CD14-positive monocyte (primary cell): ENCODE measurements at regions of chr3 and their contacts with region 1.

Region 1: DNA sequence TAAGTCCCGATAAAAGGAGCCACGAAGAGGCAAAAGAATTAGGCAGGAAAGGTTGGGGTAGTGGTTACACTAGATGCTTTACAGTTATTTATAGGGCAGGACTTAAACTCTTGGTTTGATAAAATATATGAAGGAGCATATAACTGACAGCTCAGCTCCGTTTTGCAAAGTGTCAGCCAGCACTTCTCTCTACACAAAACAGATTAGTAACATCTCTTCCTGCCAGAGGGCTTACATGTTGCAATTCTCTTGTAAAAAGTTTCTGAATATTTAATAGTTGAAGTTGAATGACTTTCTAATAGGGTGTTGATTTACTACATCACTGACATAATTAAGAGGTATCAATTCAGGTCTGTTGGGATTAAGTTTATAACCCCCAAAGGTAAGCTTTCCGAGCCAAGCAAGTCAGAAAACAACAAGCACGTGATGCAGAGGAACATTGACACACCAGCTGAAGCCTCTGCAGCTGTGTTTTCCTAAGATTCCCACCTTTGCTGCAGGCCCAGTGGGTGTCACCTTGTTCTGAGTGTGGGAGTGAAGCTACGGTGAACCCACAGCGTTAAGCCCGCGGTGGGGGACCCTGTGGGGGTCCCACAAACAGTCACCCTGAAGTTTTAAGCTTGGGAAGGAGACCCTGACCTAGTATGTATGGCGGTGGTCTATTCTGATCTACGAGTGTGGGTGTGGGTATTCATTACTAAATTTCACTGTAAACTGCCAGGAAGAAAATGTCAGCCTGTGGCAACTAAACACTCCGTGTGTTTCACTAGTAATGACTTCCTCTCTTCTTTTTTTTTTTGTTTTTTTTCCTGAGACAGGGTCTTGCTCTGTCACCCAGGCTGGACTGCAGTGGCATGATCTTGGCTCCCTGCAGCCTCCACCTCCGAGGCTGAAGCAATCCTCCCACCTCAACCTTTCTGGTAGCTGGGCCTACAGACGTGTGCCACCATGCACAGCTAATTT is 22.0 kb upstream of the ATP13A3 start:
- DNase-seq: peak in 2 of 3 donors; percentile 41 to 57
- H3K4me3 ChIP-seq: peak overlapping the region in 1 of 3 experiments; percentile 44
- H3K4me3 Mint-ChIP-seq: peak overlapping the region; percentile 24 to 47
- H3K27ac ChIP-seq: peak overlapping the region; percentile 37 to 78
- H3K27ac Mint-ChIP-seq: peak overlapping the region; percentile 68 to 90 (median 85)
- H3K4me1 ChIP-seq: peaks cover 18 to 21% of the 10 kb centered on the region in 2 donors
- H3K4me1 Mint-ChIP-seq: peaks cover 21% of the 10 kb centered on the region
- H3K27me3 ChIP-seq: no peaks in the 10 kb centered on the region
- H3K27me3 Mint-ChIP-seq: peaks cover 0 to 6% (median 3%) of the 10 kb centered on the region in 3 donors
- CTCF ChIP-seq: no peak

Region 2: DNA sequence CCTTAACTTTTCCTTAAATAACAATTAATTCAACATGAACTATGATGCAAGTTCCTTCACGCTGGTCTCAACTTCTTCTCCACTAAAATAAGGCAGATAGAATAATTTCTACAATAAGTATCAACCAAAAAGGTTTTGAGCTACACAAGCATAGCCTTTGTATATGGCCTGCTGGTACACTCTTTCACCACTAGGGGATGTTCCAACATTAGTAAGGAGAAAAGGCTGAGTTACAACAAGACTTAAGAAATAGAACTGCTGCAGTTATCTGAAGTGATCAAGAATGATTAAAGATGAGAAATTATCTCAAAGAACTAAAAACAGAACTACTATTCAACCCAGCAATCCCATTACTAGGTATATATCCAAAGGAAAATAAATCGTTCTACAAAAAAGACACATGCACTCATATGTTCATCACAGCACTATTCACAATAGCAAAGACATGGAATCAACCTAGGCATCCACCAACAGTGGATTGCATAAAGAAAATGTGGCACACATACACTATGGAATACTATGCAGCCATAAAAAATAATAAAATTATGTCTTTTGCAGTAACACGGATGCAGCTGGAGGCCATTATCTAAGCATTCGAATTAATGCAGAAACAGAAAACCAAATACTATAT is 36.4 kb before region 1 on chr3:
- intact Hi-C with region 1: no loop called
- DNase-seq: peak in 2 of 3 donors; percentile 67 to 73
- H3K4me3 ChIP-seq: no peak overlapping the region
- H3K4me3 Mint-ChIP-seq: no peak overlapping the region
- H3K27ac ChIP-seq: no peak overlapping the region
- H3K27ac Mint-ChIP-seq: peak overlapping the region in 2 of 7 donors; percentile 43 to 55
- H3K4me1 ChIP-seq: peaks cover 4 to 18% of the 10 kb centered on the region in 2 donors
- H3K4me1 Mint-ChIP-seq: peaks cover 13% of the 10 kb centered on the region
- H3K27me3 ChIP-seq: no peaks in the 10 kb centered on the region
- H3K27me3 Mint-ChIP-seq: no peaks in the 10 kb centered on the region
- CTCF ChIP-seq: peak; percentile 97

Region 3: GRCh38 chr3:194492001-194492400 is 16.8 kb before region 1 on chr3:
- intact Hi-C with region 1: loop called in 1 of 2 experiments (anchors 2 kb)
- DNase-seq: peak; percentile 82 to 92 (median 89)
- H3K4me3 ChIP-seq: peak overlapping the region in 1 of 3 experiments; percentile 32
- H3K4me3 Mint-ChIP-seq: peak overlapping the region; percentile 1 to 75
- H3K27ac ChIP-seq: peak overlapping the region; percentile 41 to 64
- H3K27ac Mint-ChIP-seq: peak overlapping the region; percentile 79 to 95 (median 86)
- H3K4me1 ChIP-seq: peaks cover 87 to 91% of the 10 kb centered on the region in 2 donors
- H3K4me1 Mint-ChIP-seq: peaks cover 83% of the 10 kb centered on the region
- H3K27me3 ChIP-seq: no peaks in the 10 kb centered on the region
- H3K27me3 Mint-ChIP-seq: peaks cover 0 to 11% (median 1%) of the 10 kb centered on the region in 3 donors
- CTCF ChIP-seq: no peak